ENCODE measurements at regions of chr2 and their contacts with region 1.

Region 1: GRCh38 chr2:105521205-105521604 is 122.4 kb upstream of the FHL2 start:
- DNase-seq: no peak
- ATAC-seq: no peak

Region 2: DNA sequence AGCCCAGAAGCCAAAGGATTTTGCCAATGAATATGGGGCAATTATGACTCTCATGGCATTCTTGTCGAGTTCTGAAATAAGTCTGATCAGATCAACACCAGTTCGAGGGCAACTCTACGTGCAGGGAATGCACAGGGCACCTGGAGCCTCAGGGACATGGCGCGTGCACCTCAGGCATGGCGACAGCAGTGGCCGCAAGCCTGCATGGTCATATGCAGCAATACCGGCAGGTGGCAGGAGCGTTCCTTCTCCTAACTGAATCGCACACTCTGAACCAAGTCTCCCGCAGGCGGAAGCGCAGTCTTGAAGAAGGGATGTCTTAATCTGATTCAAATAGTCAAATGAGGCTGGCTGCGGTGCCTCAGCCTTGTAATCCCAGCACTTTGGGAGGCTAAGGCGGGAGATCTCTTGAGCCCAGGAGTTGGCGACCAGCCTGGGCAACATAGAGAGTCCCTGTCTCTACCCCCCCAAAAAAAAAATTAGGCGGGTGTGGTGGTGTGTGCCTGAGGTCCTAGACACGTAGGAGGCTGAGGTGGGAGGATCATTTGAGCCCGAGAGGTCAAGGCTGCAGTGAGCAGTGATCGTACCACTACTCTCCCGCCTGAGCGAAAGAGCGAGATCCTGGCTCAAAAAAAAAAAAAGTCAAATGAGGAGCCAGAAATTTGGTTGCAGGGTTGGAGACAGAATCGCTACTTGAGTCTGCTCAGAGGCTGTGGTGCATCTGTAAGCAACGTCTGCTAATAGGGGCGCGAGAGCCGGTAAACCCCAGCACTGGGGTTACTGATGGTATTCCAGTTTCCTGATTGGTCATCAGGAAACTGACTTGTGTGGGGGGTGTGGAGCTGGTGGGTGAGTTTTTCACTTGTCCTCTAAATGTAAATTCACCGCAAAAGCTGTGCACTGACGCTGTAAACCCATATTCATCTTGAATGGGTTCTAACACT is 151.2 kb before region 1 on chr2:
- intact Hi-C with region 1: loop called (anchors 5 kb)
- DNase-seq: peak; percentile 92
- ATAC-seq: peak; percentile 82

Region 3: DNA sequence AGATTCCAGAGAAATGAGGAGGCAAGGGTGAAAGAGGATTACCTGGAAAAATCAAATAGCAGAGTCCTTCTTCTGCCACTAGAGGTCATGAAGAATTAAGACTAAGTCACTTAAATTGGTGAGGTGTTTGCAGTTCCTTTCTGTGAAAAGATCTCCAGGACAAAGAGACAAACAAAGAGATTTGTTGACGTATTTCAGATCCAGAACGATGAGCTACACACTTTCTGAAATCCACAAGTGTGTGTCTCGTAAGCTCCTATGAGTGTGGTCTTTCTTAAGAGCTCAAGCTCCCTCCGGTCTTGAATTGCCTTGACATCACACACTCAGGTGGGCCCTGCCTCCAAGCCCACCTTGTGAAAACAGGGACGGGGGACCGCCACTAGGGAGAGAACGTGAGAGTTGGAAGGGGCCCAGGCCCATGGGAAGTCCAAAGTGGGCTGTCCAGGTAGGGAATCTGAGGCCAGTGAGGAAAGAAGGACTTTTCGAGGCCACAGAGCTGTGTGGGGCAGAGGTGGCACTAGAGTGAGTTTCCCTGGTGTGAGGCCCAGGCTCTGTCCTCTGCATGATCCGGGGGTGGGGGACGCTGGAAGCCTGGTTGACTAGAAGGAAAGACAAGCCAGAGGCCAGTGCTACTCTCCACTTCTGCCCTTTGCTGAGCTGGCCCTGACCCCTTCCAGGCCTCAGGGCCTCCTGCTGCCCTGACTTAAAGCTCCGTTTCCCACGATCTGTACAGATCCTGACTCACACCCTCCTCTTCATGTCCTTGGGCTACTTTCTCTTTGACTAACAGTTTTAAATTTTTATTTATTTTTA is 55.4 kb after region 1 on chr2:
- intact Hi-C with region 1: loop called (anchors 2 kb)
- DNase-seq: no peak
- ATAC-seq: peak; percentile 62